Activated CD8-positive, alpha-beta T cell treated with anti-CD3 and anti-CD28 coated beads for 36 hours (primary cell): ENCODE measurements at regions of chr10 and their contacts with region 1.

Region 1: DNA sequence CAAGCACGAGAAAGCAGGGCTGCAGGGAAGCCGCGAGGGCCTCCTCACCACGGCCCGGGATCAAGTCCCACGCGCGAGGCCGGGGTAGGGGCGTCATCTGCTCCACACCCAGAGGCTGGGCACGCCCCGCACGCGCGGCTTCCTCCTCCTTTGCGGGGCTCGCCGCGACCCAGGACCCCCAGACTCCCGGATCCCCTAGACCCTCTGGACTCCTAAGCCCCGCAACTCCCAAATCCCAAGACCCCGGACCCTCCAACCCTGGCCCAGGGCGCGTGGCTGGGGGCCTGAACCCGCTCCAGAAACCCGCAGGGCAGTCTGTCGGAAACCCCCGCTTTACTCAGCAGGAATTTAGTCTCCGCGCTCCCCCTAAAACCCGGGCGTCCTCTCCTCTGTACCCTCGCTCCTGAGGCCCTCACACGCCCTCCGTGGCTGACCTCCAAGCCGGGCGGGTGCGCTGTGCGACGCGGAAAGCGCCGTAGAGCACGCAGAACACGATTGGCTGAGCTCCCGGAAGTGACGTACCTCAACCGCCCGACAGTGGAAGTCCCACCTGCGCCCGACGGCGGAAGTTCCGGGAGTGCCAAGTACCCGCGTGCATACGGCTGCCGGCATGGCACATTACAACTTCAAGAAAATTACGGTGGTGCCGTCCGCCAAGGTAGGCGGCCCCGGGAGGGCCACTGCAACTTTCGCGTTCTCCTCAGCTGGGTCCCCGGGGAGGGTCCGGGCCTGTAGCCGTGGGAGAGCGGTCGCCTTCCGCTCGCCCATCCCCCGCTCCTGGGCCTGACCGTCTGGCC is at the start of gene GTPBP4:
- DNase-seq: peak; percentile 99
- ATAC-seq: peak; percentile 99
- H3K4me3 Mint-ChIP-seq: peak within 1 kb of the TSS; percentile 95
- H3K27ac Mint-ChIP-seq: peak within 1 kb of the TSS; percentile 97
- H3K4me1 Mint-ChIP-seq: peaks cover 31% of the 10 kb centered on the region
- H3K27me3 Mint-ChIP-seq: no peaks in the 10 kb centered on the region
- CTCF ChIP-seq: no peak
- total RNA-seq, gene GTPBP4: 119 to 128 TPM

Region 2: DNA sequence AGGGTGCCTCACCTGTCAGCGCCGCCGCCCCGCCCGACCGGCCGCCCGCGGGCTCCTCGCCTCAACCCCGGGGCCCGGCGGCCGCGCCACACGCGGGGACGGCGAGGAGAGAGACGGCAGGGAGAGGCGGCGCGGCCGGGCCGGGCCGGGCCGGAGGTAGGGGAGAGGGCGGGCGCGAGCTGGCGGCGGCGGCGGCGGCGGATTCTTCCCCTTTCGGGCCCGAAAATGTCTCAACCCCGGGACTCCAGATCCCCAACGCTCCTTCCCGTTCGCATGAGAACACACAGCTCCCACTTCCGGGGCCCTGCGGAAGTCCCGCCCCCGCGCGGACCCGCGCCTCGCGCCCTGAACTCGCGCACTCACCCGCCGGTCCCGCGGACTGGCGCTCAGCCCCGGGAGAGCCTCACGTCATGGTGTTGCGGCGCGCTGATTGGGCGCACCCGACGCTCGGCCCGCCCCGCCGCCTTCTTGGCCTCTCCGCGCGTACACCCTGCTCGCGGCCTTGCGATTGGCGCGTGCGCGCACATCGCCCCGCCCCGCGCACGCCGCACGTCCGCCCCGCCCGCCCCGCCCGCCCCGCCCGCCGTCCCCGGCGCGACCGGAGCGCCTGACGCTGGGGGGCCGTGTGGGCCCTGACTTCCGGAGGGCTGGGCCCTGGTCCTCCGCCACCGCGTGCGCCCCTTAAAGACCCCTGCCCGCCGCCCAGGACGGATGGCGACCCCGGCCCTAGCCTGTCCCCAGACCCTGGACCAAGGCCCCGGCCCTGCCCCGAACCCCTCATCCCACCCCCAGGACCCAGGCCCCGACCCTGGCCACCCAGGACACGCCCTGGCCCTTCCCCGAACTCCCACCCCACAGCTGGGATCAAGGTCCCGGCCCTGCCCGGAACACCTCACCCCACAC is 56.4 kb before region 1 on chr10 and contains the start of gene LARP4B:
- CTCF ChIA-PET with region 1: interaction called, 3 read pairs
- POLR2A ChIA-PET with region 1: interaction called, 23 read pairs
- intact Hi-C with region 1: loop called (anchors 5 kb)
- DNase-seq: peak; percentile 96
- ATAC-seq: peak; percentile 99
- H3K4me3 Mint-ChIP-seq: peak within 1 kb of the TSS; percentile 91
- H3K27ac Mint-ChIP-seq: peak within 1 kb of the TSS; percentile 93
- H3K4me1 Mint-ChIP-seq: peaks cover 32% of the 10 kb centered on the region
- H3K27me3 Mint-ChIP-seq: no peaks in the 10 kb centered on the region
- CTCF ChIP-seq: no peak
- total RNA-seq, gene LARP4B: 101 to 104 TPM

Region 3: GRCh38 chr10:938990-939678 is 48.9 kb before region 1 on chr10:
- CTCF ChIA-PET with region 1: interaction called, 3 read pairs
- POLR2A ChIA-PET with region 1: interaction called, 9 read pairs
- intact Hi-C with region 1: loop called (anchors 5 kb)
- DNase-seq: no peak
- ATAC-seq: peak; percentile 35
- H3K4me3 Mint-ChIP-seq: no peak overlapping the region
- H3K27ac Mint-ChIP-seq: no peak overlapping the region
- H3K4me1 Mint-ChIP-seq: peaks cover 31% of the 10 kb centered on the region
- H3K27me3 Mint-ChIP-seq: no peaks in the 10 kb centered on the region
- CTCF ChIP-seq: no peak

Region 4: DNA sequence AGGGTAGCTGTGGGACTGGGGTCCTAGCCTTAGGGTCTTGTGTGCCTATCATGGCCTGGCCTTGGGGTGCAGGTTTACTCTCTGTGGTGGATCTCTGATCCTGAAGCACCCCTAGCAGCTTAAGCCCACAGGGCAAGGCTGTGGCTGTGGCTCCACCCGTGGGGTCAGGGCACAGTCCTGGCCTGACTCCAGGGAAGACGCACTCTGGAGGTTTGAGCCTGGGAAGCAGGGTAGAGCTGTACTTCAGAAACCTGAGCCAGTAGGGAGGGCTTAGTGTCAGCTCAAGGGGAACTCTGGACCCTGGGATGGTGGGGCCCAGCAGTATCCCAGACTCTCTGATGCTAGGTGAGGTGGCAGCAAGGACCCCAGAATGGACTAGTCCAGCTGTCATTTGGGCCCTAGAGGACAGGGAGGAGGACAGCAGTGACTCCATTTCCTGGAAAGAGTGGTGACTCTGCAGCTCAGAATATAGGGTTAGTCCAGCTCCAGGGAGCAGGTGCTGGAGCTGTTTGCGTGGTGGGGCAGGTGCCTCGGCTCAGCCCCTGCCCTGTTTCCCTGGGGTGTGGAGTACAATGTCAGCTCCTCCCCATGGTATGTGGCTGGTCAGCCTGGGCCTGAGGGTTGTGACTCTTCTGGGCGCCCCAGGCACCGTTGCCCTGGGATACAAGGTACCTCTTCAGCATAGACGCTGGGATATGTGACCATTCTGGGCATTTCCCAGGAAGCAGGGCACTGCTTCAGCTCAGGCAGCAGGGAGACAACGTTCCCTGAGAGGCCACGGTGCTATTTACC is 16.0 kb after region 1 on chr10:
- CTCF ChIA-PET with region 1: no interaction called
- POLR2A ChIA-PET with region 1: interaction called, 18 read pairs
- intact Hi-C with region 1: no loop called
- DNase-seq: no peak
- ATAC-seq: no peak
- H3K4me3 Mint-ChIP-seq: no peak overlapping the region
- H3K27ac Mint-ChIP-seq: no peak overlapping the region
- H3K4me1 Mint-ChIP-seq: peaks cover 24% of the 10 kb centered on the region
- H3K27me3 Mint-ChIP-seq: no peaks in the 10 kb centered on the region
- CTCF ChIP-seq: no peak

Region 5: DNA sequence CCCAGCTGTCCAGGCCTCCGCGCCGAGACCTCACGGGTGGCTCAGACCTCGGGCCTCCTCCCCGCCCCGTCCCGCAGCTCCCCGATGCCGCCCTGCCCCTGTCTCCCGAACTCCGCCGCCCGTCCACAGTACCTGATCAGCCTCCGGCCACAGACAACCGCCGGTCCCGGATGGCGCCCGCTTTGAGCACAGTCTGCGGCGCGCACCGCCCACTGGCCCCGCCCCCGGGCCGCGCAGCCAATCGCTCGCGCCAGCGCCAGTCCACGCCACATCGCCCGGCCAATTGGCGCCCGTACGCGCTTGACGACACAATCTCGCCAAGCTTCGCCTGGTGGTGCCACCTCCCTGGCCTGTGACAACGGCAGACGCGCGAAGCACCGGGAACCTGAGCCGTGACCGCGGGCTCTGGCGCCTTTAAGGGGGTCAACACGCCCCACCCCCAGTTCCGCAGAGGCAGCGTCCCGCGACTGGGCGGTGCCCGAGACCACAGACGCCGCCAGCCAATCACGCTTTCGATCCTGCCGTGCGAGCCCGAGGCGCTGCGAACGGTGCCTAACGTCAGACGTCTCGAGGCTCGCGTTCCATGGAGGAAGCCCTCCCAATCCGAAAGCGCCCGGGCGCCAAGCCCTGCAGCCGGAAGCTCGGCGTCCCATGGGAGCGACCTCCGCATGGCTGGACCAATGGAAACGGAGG is 60.8 kb after region 1 on chr10 and contains the start of gene IDI1:
- CTCF ChIA-PET with region 1: interaction called, 3 read pairs
- POLR2A ChIA-PET with region 1: interaction called, 24 read pairs
- intact Hi-C with region 1: loop called (anchors 5 kb)
- DNase-seq: peak; percentile 98
- ATAC-seq: peak; percentile 87
- H3K4me3 Mint-ChIP-seq: peak within 1 kb of the TSS; percentile 98
- H3K27ac Mint-ChIP-seq: peak within 1 kb of the TSS; percentile 96
- H3K4me1 Mint-ChIP-seq: peaks cover 64% of the 10 kb centered on the region
- H3K27me3 Mint-ChIP-seq: no peaks in the 10 kb centered on the region
- CTCF ChIP-seq: no peak
- total RNA-seq, gene IDI1: 67.7 to 69.5 TPM